H1 (cell line): ENCODE measurements at regions of chr1 and their contacts with region 1.

Region 1: DNA sequence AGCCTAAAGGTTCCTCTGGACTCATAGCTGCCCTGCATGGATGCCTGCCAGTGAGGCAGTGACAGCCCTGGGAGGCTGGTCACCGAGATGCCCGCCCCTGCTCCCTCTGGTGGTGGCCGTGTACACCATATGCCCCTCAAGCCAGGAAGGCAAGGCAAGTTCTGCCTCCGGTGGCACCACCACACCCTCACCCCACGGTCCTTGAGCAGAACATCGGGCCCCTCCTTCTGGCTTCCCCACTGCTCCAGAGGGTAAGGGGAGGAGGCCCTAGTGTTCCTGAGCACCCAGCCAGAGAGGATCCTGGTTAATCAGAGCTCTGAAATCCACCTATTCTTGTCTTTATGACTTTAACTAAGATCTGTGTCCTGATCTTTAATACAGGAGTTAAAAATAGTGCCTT is 1.6 kb upstream of the S100A14 start:
- DNase-seq: peak; percentile 54 to 89
- H3K4me3 ChIP-seq: no peak overlapping the region
- H3K27ac ChIP-seq: no peak overlapping the region
- H3K4me1 ChIP-seq: peaks cover 0 to 13% (median 5%) of the 10 kb centered on the region in 4 experiments; a peak in 6 of 7 replicates
- H3K27me3 ChIP-seq: no peaks in the 10 kb centered on the region
- CTCF ChIP-seq: peak; percentile 93 to 99 (median 94)
- EP300 ChIP-seq: no peak
- POLR2A ChIP-seq: no peak
- RAD21 ChIP-seq: peak; percentile 67 to 83

Region 2: DNA sequence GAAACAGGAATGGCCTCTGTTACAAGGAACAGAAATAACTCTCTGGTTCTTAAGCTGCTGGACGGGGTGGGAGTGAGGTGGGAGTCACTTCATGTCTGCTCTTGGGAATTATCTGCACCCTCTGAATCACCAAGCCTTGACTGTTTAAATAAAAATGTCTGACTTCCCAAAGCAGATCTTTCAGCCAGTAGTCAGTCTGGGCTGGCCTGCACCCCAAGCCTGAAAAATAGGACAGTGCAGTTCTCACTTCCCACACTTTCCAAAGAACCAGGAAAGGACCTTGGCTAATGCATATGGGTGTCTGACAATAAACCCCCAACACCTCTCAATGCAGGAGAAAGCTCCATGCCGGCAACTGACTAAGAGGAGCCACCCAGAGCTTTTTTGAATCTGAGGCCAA is 158.0 kb before region 1 on chr1:
- CTCF ChIA-PET with region 1: no interaction called
- POLR2A ChIA-PET with region 1: no interaction called
- DNase-seq: no peak
- H3K4me3 ChIP-seq: no peak overlapping the region
- H3K27ac ChIP-seq: no peak overlapping the region
- H3K4me1 ChIP-seq: no peaks in the 10 kb centered on the region
- H3K27me3 ChIP-seq: no peaks in the 10 kb centered on the region
- CTCF ChIP-seq: no peak
- EP300 ChIP-seq: no peak
- POLR2A ChIP-seq: no peak
- RAD21 ChIP-seq: no peak

Region 3: GRCh38 chr1:153510984-153511410 is 106.7 kb before region 1 on chr1:
- CTCF ChIA-PET with region 1: interaction called, 55 read pairs
- POLR2A ChIA-PET with region 1: no interaction called
- DNase-seq: peak in 1 of 2 experiments; percentile 93
- H3K4me3 ChIP-seq: no peak overlapping the region
- H3K27ac ChIP-seq: no peak overlapping the region
- H3K4me1 ChIP-seq: peaks cover 0 to 3% (median 1%) of the 10 kb centered on the region in 4 experiments; a peak in 3 of 7 replicates
- H3K27me3 ChIP-seq: peaks cover 0 to 5% (median 2%) of the 10 kb centered on the region in 4 experiments; a peak in 3 of 7 replicates
- CTCF ChIP-seq: peak; percentile 95 to 97 (median 95)
- EP300 ChIP-seq: no peak
- POLR2A ChIP-seq: no peak
- RAD21 ChIP-seq: peak; percentile 99 to 100

Region 4: DNA sequence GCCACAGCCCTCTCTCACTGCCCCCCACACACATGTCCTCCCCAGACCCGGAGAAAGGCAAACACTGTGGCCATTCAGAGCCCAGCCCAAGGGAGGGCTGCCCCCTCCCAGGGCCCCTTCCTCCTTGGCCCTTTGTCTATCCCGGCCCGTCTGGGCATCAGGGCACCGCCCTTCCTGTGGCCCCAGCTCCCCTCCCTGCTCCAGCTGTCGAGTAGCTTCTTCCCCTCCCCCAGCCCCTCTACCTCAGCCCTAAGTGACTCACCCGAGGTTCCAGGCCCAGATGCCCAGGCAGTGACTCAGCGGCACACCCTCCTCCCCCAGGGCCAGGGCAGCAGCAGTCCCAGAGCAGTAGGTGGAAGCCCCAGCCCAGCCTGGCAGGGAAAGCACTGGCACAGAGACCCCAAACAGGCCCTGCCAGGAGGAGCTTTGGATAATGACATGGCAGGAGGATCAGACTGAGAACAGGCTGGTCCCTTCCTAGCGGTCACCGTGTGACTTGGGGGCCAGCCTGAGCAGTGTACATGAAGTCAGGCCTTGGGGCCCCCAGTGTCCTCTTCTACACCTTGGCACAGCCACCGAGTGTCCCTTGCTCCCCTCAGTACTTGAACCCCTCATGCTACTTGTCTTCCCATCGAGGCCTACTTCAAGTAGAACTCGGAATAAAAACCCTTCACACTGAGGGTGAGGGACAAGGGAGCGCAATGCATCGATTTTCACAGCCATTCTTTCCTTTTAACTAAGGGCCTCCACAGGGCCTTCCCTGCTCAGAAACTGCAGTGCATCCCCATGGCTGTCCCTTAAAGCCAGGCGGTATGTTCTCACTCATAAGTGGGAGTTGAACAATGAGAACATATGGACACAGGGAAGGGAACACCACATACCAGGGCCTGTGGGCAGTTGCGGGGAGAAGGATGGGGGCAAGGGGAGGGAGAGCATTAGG is 51.0 kb before region 1 on chr1:
- CTCF ChIA-PET with region 1: interaction called, 224 read pairs
- POLR2A ChIA-PET with region 1: interaction called, 7 read pairs
- DNase-seq: peak; percentile 76 to 90
- H3K4me3 ChIP-seq: no peak overlapping the region
- H3K27ac ChIP-seq: no peak overlapping the region
- H3K4me1 ChIP-seq: peaks cover 11 to 26% (median 20%) of the 10 kb centered on the region in 4 experiments
- H3K27me3 ChIP-seq: 0 out of 7 replicates have a peak, but pooled peaks cover 0 to 4% (median 0%) of the 10 kb centered on the region in 4 experiments
- CTCF ChIP-seq: no peak
- EP300 ChIP-seq: peak in 1 of 2 experiments; percentile 73; a peak in 1 of 3 replicates
- POLR2A ChIP-seq: peak in 1 of 2 experiments; percentile 24; a peak in 1 of 3 replicates
- RAD21 ChIP-seq: no peak; a peak in 2 of 4 replicates

Region 5: GRCh38 chr1:153577624-153578051 is 40.0 kb before region 1 on chr1:
- CTCF ChIA-PET with region 1: interaction called, 224 read pairs
- POLR2A ChIA-PET with region 1: interaction called, 7 read pairs
- DNase-seq: no peak
- H3K4me3 ChIP-seq: no peak overlapping the region
- H3K27ac ChIP-seq: no peak overlapping the region
- H3K4me1 ChIP-seq: peaks cover 0 to 3% (median 0%) of the 10 kb centered on the region in 4 experiments; a peak in 2 of 7 replicates
- H3K27me3 ChIP-seq: no peaks in the 10 kb centered on the region
- CTCF ChIP-seq: no peak
- EP300 ChIP-seq: no peak
- POLR2A ChIP-seq: no peak
- RAD21 ChIP-seq: no peak

Region 6: DNA sequence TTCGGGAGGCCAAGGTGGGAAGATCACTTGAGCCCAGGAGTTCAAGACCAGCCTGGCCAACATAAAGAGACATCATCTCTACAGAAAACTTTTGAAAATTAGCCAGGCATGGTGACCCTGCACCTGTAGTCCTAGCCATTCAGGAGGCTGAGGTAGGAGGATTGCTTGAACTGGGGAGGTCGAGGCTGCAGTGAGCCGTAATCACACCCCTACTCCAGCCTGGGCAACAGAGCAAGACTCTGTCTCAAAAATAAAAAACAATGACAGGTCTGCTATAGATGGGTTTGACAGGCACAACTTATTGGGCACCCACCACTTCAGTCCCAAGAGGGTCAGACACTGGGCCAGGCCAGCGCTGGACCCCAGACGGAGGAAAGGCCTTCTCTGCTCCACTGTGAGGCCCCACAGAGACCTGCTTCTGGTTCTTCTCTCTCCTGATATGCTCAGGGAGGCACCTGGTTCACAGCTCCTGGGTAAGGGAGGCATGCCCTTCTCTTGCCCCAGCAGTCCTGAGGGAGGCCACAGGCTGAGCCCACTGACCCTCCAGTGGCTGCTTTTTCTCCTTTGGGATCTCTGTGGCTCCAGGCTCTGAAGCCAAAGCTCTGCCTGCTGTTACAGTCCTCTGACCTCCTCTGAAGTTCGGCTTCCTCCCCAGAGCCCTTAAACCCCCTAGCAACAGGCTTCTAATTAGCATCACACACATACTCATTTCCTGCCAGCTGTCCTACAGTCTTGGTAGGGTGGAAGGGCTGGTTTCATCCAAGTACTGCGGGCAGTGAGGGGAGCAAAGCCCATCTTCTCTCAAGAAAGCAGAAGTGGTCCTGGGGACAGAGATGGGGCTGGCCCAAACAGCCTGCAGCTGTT is 19.1 kb before region 1 on chr1:
- CTCF ChIA-PET with region 1: interaction called, 80 read pairs
- POLR2A ChIA-PET with region 1: interaction called, 15 read pairs
- DNase-seq: peak; percentile 53 to 63
- H3K4me3 ChIP-seq: no peak overlapping the region
- H3K27ac ChIP-seq: no peak overlapping the region
- H3K4me1 ChIP-seq: peaks cover 3 to 10% (median 5%) of the 10 kb centered on the region in 4 experiments; a peak in 4 of 7 replicates
- H3K27me3 ChIP-seq: no peaks in the 10 kb centered on the region
- CTCF ChIP-seq: no peak
- EP300 ChIP-seq: peak in 1 of 2 experiments; percentile 80; a peak in 1 of 3 replicates
- POLR2A ChIP-seq: peak in 1 of 2 experiments; percentile 59; a peak in 2 of 3 replicates
- RAD21 ChIP-seq: 0 out of 4 replicates have a peak, but pooled peaks of 1 of the 2 experiments have one; percentile 8

Region 7: GRCh38 chr1:153633716-153634665 is 16.3 kb after region 1 on chr1 and contains the start of gene CHTOP:
- CTCF ChIA-PET with region 1: interaction called, 114 read pairs
- POLR2A ChIA-PET with region 1: interaction called, 261 read pairs
- DNase-seq: peak; percentile 98 to 100
- H3K4me3 ChIP-seq: peak within 1 kb of the TSS; percentile 73 to 100 (median 97)
- H3K27ac ChIP-seq: peak within 1 kb of the TSS; percentile 100
- H3K4me1 ChIP-seq: peaks cover 0 to 5% (median 5%) of the 10 kb centered on the region in 4 experiments; a peak in 5 of 7 replicates
- H3K27me3 ChIP-seq: no peaks in the 10 kb centered on the region
- CTCF ChIP-seq: peak in 1 of 3 experiments; percentile 10; a peak in 1 of 4 replicates
- EP300 ChIP-seq: no peak
- POLR2A ChIP-seq: peak; percentile 82 to 97
- RAD21 ChIP-seq: no peak
- total RNA-seq, gene CHTOP: 103 and 104 TPM in 2 replicates